OCI-LY7 (cell line): ENCODE measurements at regions of chr7 and their contacts with region 1.

Region 1: DNA sequence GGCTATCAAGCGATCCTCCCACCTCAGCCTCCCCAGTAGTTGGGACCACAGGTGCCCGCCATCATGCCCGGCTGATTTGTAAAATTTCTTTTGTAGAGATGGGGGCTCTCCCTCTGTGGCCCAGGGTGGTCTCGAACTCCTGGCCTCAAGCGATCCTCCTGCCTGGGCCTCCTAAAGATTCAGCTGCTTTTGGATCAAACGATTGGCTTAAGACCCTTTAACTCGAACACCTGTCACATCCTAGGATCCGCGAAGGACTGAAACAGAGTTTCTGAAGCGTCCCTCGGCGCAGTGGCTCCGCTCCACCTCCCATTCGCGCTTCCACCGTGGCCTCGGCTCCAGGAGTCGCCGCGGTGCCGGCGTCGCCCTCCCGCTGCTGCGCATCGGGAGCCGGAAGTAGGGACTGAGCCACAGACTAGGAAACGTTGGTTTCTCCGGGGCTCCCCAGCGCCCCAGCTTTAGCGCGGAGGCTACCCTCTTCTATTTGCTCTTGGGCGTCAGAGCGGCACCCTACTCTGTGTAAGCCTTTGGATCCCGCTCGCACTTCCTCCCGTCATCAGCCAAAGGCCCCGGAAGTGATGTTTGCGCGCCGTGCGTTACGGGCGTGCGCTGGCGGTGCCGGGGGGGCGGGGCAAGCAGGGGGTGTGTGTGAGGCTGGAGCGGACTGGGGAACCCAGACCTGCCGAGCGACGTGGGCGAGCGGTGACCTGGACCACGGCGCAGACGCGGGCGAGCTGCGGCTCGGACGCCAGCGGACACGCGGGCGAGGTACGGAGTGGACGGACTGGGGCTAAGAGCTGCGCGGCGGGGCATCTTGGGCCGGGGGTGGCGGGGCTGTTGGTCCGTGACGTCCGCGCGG is 53.0 kb downstream of the KCTD7 start:
- DNase-seq: peak; percentile 95
- H3K4me3 ChIP-seq: peak overlapping the region; percentile 80
- H3K27ac ChIP-seq: peak overlapping the region; percentile 76
- H3K4me1 ChIP-seq: peaks cover 27% of the 10 kb centered on the region
- CTCF ChIP-seq: no peak

Region 2: DNA sequence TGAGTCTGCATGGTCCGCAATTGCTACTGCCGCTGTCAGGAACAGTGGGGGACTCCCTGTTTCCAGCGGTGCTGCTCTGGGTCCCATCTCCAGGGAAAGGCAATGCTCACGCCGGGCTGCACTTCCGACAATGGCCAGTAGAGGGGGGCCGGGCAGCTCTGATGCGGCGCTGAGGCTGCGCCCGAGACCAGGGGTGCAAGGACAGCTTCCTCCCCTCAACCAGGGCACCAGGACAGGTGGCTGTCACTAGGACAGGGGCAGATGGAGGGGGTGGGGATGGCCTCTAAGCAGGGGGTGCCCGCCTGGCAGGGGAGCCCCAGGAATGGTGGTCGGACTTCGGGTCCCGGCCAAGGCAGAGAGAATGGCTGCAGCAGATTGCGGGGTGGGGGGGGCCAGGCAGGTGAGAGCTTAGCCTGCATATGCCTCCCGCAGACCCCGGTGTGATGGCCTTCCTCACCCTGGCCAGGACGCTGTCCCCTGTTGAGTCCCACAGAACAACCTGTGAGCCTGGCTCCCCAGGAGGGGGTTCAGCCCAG is 124.0 kb before region 1 on chr7:
- CTCF ChIA-PET with region 1: no interaction called
- POLR2A ChIA-PET with region 1: no interaction called
- intact Hi-C with region 1: loop called (anchors 10 kb)
- DNase-seq: peak; percentile 58
- H3K4me3 ChIP-seq: no peak overlapping the region
- H3K27ac ChIP-seq: no peak overlapping the region
- H3K4me1 ChIP-seq: no peaks in the 10 kb centered on the region
- CTCF ChIP-seq: peak; percentile 88

Region 3: DNA sequence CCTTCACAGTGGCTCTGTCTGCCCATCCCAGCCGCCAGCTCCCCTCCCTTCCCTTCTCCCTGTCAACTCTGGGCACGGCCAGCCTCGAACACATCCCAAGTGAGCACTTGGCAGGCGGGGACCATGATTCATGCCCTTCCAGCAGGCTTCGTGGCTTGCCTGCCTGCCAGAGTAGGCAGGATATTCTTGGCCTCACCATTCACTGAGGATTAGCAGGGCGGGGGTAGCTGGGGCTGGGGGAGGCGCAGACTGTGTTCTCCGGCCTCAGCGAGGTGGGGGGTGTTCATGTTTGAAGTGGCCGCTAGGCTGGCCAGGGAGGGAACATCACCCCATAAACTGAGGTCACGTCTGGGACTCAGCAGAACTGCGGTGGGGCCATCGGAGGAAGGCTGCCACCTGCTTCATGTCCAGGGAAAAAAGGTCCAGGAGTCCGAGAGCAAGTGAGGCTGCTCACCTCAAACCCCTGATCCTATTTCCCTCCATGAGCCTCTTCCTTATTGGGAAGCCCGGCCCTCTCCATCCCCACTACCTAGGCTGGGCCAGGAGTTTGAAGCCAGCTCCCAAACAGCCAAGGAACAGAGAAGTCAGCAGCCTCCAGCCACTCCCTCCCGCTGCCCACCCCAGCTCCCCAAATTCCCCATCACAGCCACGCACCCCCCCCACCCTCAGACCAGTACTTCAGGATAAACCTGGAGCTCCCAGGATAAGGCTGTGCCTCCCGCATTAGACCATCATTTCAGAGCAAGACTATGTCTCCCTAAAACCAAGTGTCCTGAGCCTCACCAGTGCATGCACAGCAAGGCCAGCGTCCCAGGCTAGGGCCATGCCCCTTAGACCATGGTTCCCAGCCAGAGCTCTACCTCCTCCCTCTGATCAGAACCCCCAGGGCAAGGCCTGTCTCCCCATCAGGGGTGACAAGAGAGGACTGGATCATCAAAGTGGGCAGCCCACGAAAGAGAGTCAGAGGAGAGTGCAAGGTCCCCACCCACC is 16.0 kb after region 1 on chr7:
- CTCF ChIA-PET with region 1: interaction called, 12 read pairs
- POLR2A ChIA-PET with region 1: no interaction called
- intact Hi-C with region 1: no loop called
- DNase-seq: no peak
- H3K4me3 ChIP-seq: no peak overlapping the region
- H3K27ac ChIP-seq: no peak overlapping the region
- H3K4me1 ChIP-seq: no peaks in the 10 kb centered on the region
- CTCF ChIP-seq: no peak

Region 4: GRCh38 chr7:66740302-66740979 is 58.7 kb after region 1 on chr7 and contains the start of gene RABGEF1:
- CTCF ChIA-PET with region 1: no interaction called
- POLR2A ChIA-PET with region 1: interaction called, 5 read pairs
- intact Hi-C with region 1: loop called (anchors 5 kb)
- DNase-seq: peak; percentile 97
- H3K4me3 ChIP-seq: peak within 1 kb of the TSS; percentile 77
- H3K27ac ChIP-seq: peak within 1 kb of the TSS; percentile 80
- H3K4me1 ChIP-seq: peaks cover 39% of the 10 kb centered on the region
- CTCF ChIP-seq: no peak
- total RNA-seq, gene RABGEF1: 18.2 and 21.0 TPM in 2 replicates